ENCODE measurements at regions of chr15 and their contacts with region 1.

Region 1: GRCh38 chr15:42920519-42921227 is at the start of gene TTBK2:
- DNase-seq: peak; percentile 98 to 99
- ATAC-seq: peak; percentile 98 to 100 (median 99)
- H3K4me3 ChIP-seq: peak within 1 kb of the TSS; percentile 79 to 100 (median 98)
- H3K27ac ChIP-seq: peak within 1 kb of the TSS; percentile 71 to 93 (median 91)
- H3K4me1 ChIP-seq: peaks cover 0 to 42% (median 20%) of the 10 kb centered on the region in 9 donors
- H3K27me3 ChIP-seq: no peaks in the 10 kb centered on the region
- CTCF ChIP-seq: peak in 4 of 9 donors; percentile 18 to 37 (median 32)
- total RNA-seq, gene TTBK2: 20.5 to 29.1 (median 23.4) TPM

Region 2: DNA sequence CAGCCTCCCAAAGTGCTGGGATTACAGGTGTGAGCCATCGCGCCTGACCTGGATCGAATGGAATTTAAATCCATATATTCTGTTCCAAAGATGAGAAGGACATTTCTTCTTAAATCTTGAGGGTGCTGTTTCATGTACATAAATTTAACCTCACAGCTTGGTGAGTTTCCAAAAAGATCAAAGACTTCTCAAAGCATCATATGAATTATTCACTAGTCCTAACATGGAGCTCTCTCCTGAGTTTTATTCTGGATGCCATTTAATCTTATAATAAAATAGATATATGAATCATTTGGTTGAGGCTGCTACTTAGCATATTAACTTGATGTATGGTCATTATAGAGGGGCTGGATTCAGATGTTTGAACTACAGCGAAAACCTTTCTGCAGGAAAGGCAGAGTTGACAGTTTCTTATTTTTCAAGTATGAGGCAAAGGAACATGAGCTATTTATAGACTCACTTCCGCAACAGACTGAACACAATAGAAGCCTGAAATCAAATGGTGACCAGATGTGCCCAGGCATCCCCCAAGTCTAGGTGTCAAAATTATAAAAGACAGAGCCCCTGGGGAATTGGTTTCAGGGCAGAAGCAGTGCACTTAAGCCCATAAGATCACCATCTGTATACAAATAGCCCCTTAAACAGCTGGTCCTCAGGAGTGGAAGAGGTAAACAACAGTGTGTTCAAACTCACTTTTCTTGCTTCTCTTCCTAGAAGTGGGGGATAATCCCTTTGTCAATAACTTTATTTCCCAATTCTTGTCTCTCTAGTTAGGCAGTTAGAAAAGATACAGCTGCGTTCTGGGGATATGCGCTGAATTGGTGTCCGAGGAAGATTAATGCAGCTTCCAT is 315.6 kb before region 1 on chr15:
- intact Hi-C with region 1: no loop called
- DNase-seq: peak in 1 of 2 donors; percentile 25
- ATAC-seq: peak; percentile 50 to 82 (median 72)
- H3K4me3 ChIP-seq: peak overlapping the region in 1 of 10 donors; percentile 16
- H3K27ac ChIP-seq: peak overlapping the region in 8 of 10 donors; percentile 32 to 77 (median 63)
- H3K4me1 ChIP-seq: peaks cover 8 to 69% (median 46%) of the 10 kb centered on the region in 9 donors
- H3K27me3 ChIP-seq: no peaks in the 10 kb centered on the region
- CTCF ChIP-seq: no peak

Region 3: DNA sequence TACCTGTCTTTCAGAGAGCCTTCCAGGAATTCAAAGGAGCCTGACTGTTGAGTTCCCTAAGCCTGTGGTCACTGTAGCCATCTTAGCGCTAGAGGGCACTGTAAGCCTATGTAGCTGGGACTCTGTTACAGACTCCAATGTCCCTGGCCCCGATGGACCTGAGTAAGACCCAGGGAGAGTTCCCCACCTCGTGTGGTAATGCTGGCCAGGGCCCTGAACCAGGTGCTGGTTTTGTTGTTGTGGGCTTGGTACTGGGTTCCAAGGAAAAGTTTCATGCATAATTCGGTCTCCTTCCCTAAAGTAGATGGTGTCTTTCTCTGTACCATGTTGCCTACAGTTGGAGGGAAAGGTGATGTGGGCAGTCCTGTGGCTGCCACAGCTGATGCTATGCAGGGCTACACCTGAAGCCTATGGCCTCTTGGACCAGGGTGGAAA is 216.2 kb before region 1 on chr15:
- intact Hi-C with region 1: loop called in 3 of 10 experiments (anchors 5 to 10 kb)
- DNase-seq: peak in 1 of 2 donors; percentile 52
- ATAC-seq: peak; percentile 82 to 96 (median 94)
- H3K4me3 ChIP-seq: no peak overlapping the region
- H3K27ac ChIP-seq: no peak overlapping the region
- H3K4me1 ChIP-seq: peaks cover 0 to 5% (median 0%) of the 10 kb centered on the region in 9 donors
- H3K27me3 ChIP-seq: no peaks in the 10 kb centered on the region
- CTCF ChIP-seq: peak; percentile 57 to 84 (median 80)

Region 4: GRCh38 chr15:42736793-42737528 is 183.7 kb before region 1 on chr15 and contains the start of gene CDAN1:
- intact Hi-C with region 1: loop called in 4 of 10 experiments (anchors 10 kb)
- DNase-seq: peak; percentile 91 to 95
- ATAC-seq: peak; percentile 97 to 98 (median 98)
- H3K4me3 ChIP-seq: peak within 1 kb of the TSS; percentile 71 to 98 (median 91)
- H3K27ac ChIP-seq: peak within 1 kb of the TSS; percentile 72 to 92 (median 89)
- H3K4me1 ChIP-seq: peaks cover 4 to 25% (median 19%) of the 10 kb centered on the region in 9 donors
- H3K27me3 ChIP-seq: no peaks in the 10 kb centered on the region
- CTCF ChIP-seq: peak in 1 of 9 donors; percentile 16
- total RNA-seq, gene CDAN1: 4.4 to 9.0 (median 6.8) TPM

Region 5: GRCh38 chr15:42800731-42801474 is 119.8 kb before region 1 on chr15:
- intact Hi-C with region 1: loop called in 7 of 10 experiments (anchors 5 to 10 kb)
- DNase-seq: no peak
- ATAC-seq: no peak
- H3K4me3 ChIP-seq: no peak overlapping the region
- H3K27ac ChIP-seq: no peak overlapping the region
- H3K4me1 ChIP-seq: peaks cover 0 to 8% (median 0%) of the 10 kb centered on the region in 9 donors
- H3K27me3 ChIP-seq: no peaks in the 10 kb centered on the region
- CTCF ChIP-seq: peak in 5 of 9 donors; percentile 9 to 30 (median 18)

Region 6: GRCh38 chr15:42826251-42826890 is 94.3 kb before region 1 on chr15:
- intact Hi-C with region 1: loop called in 1 of 10 experiments (anchors 10 kb)
- DNase-seq: no peak
- ATAC-seq: no peak
- H3K4me3 ChIP-seq: no peak overlapping the region
- H3K27ac ChIP-seq: no peak overlapping the region
- H3K4me1 ChIP-seq: no peaks in the 10 kb centered on the region
- H3K27me3 ChIP-seq: no peaks in the 10 kb centered on the region
- CTCF ChIP-seq: no peak

Region 7: DNA sequence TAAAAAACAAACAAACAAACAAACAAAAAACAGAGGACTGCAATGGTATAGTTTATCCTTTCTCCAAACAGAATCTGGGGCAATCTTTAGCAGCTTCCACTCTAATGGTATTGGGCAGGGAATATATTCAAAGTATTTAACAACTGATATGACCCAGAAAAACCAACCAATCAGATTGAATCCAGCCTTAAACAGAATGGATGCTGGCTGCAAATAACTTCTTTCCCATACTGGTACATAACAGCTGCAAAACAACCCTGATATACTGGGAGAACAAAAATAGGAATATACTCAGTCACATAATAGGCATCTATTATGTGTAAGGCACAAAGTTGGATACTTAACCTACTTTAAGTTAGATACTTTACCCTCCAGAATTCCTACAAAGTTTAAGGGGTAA is 136.0 kb after region 1 on chr15:
- intact Hi-C with region 1: no loop called
- DNase-seq: no peak
- ATAC-seq: no peak
- H3K4me3 ChIP-seq: no peak overlapping the region
- H3K27ac ChIP-seq: no peak overlapping the region
- H3K4me1 ChIP-seq: peaks cover 0 to 7% (median 0%) of the 10 kb centered on the region in 9 donors
- H3K27me3 ChIP-seq: no peaks in the 10 kb centered on the region
- CTCF ChIP-seq: no peak

Measured in heart right ventricle (tissue), 16 donors.